Heart left ventricle (tissue), 16 donors: ENCODE measurements at regions of chr1 and their contacts with region 1.

Region 1: DNA sequence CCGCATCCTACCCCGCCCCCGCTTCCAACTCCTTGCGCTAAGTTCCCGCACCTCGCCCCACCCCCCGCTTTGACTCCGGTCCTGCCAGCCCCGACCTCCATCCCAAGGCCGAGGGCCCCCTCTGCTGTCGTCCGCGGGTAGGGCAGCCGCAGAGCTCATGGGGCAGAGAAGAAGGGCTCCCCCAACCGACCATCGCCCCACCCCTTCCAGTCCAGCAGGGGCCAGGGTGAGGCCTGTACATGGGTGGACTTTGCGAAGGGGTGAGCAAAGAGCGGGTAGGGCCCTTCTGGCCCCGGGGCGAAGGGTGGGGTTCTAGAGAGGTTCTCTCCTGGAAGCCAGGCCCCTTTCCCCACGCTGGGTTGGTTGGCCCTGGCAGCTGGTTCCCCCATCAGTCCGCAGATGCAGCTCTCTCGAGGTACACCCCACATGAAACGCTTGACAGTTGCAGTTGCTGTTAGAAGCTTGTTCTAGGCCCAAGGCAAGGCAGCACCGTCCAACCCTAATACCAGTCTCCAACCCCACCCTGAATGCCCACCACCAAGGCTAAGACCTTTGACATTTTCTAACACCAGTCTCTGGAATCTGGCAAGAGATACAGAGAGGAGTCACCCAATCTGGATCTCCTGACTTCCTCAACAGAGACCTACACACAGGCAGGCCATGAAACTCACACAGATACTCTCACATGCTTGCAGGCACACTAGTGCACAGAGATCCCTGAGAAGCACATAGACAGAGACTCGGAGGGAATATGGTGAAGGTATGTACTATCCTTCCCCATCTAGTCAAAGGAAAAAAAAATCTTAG is 25.3 kb upstream of the ADGRB2 start:
- DNase-seq: peak; percentile 93 to 98 (median 94)
- ATAC-seq: peak; percentile 84 to 94 (median 89)
- H3K4me3 ChIP-seq: peak overlapping the region; percentile 46 to 78 (median 65)
- H3K27ac ChIP-seq: peak overlapping the region in 8 of 12 donors; percentile 70 to 87 (median 76)
- H3K4me1 ChIP-seq: peaks cover 0 to 15% (median 3%) of the 10 kb centered on the region in 12 donors
- H3K27me3 ChIP-seq: no peaks in the 10 kb centered on the region
- CTCF ChIP-seq: peak; percentile 64 to 98 (median 82)
- POLR2A ChIP-seq: peak in 1 of 2 donors; percentile 17

Region 2: DNA sequence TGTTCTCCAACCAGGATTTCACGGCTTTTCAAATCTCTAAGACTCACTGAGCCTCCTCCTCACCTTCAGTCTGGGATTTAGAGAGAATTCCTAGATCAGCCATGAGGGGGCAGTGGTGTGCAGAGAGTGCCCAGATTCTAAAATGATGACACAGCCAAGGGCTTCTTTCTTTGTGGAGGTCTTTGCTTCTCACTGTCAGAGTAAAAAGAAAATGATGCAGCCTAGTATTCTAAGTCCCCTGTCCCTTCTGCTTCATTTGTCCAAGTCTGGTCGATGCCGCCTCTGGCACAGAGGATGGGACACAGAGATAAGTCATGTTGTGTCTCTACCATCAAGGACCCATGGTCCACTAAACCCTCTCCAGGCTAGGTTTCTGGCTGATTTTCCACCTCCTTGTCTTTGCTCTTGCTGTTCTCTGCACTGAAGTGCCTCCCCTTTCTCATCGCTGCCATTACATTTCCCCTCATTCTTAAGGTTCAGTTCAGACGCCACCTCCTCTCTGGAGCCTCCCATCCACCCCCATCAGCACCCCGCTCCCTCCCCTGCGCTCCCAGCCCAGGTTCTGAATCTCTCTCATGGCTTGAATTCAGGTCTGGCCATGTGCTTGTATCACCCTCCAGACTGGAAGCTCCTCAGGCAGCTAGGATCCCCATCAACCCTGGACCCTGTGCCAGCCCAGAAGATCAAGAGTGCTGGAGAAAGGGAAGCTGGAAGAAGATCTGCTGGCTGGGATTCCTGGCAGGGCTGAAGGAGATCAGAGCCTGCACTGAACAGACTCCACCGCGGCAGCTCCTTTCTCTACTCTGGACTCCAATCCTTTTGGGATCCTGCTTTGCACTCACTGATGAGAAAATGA is 225.1 kb before region 1 on chr1:
- intact Hi-C with region 1: loop called in 9 of 10 experiments (anchors 2 to 10 kb)
- DNase-seq: peak in 1 of 5 donors; percentile 49
- ATAC-seq: peak in 3 of 4 donors; percentile 64 to 69 (median 65)
- H3K4me3 ChIP-seq: no peak overlapping the region
- H3K27ac ChIP-seq: peak overlapping the region in 3 of 12 donors; percentile 8 to 48 (median 11)
- H3K4me1 ChIP-seq: peaks cover 0 to 21% (median 9%) of the 10 kb centered on the region in 12 donors
- H3K27me3 ChIP-seq: no peaks in the 10 kb centered on the region
- CTCF ChIP-seq: peak; percentile 76 to 94 (median 87)
- POLR2A ChIP-seq: no peak

Region 3: GRCh38 chr1:31593770-31594632 is 195.5 kb before region 1 on chr1:
- intact Hi-C with region 1: loop called in 1 of 10 experiments (anchors 10 kb)
- DNase-seq: peak; percentile 80 to 90 (median 83)
- ATAC-seq: peak; percentile 79 to 91 (median 85)
- H3K4me3 ChIP-seq: no peak overlapping the region
- H3K27ac ChIP-seq: no peak overlapping the region
- H3K4me1 ChIP-seq: peaks cover 0 to 39% (median 14%) of the 10 kb centered on the region in 12 donors
- H3K27me3 ChIP-seq: no peaks in the 10 kb centered on the region
- CTCF ChIP-seq: peak; percentile 79 to 91 (median 86)
- POLR2A ChIP-seq: no peak

Region 4: GRCh38 chr1:31715087-31715872 is 74.2 kb before region 1 on chr1:
- intact Hi-C with region 1: loop called in 7 of 10 experiments (anchors 1 to 10 kb)
- DNase-seq: peak; percentile 95 to 98 (median 96)
- ATAC-seq: peak; percentile 97
- H3K4me3 ChIP-seq: peak overlapping the region in 11 of 12 donors; percentile 24 to 62 (median 55)
- H3K27ac ChIP-seq: peak overlapping the region; percentile 89 to 99 (median 96)
- H3K4me1 ChIP-seq: peaks cover 0 to 48% (median 35%) of the 10 kb centered on the region in 12 donors
- H3K27me3 ChIP-seq: peaks cover 0 to 19% (median 0%) of the 10 kb centered on the region in 9 donors
- CTCF ChIP-seq: peak; percentile 71 to 95 (median 90)
- POLR2A ChIP-seq: peak; percentile 52 to 84

Region 5: GRCh38 chr1:31762726-31763670 is 26.5 kb before region 1 on chr1:
- intact Hi-C with region 1: loop called in 5 of 10 experiments (anchors 1 to 2 kb)
- DNase-seq: peak; percentile 53 to 77 (median 66)
- ATAC-seq: peak in 3 of 4 donors; percentile 57 to 69 (median 63)
- H3K4me3 ChIP-seq: peak overlapping the region in 11 of 12 donors; percentile 30 to 71 (median 59)
- H3K27ac ChIP-seq: no peak overlapping the region
- H3K4me1 ChIP-seq: peaks cover 2 to 42% (median 29%) of the 10 kb centered on the region in 12 donors
- H3K27me3 ChIP-seq: peaks cover 0 to 46% (median 10%) of the 10 kb centered on the region in 9 donors
- CTCF ChIP-seq: peak; percentile 39 to 71 (median 56)
- POLR2A ChIP-seq: no peak

Region 6: GRCh38 chr1:32005522-32005921 is 216.1 kb after region 1 on chr1:
- intact Hi-C with region 1: no loop called
- DNase-seq: no peak
- ATAC-seq: no peak
- H3K4me3 ChIP-seq: no peak overlapping the region
- H3K27ac ChIP-seq: no peak overlapping the region
- H3K4me1 ChIP-seq: peaks cover 0 to 39% (median 0%) of the 10 kb centered on the region in 12 donors
- H3K27me3 ChIP-seq: no peaks in the 10 kb centered on the region
- CTCF ChIP-seq: no peak
- POLR2A ChIP-seq: no peak